Spleen (tissue), 13 donors: ENCODE measurements at regions of chr9 and their contacts with region 1.

Region 1: GRCh38 chr9:90914868-90915483 is 113.4 kb downstream of the SYK start:
- DNase-seq: peak; percentile 93
- H3K4me3 ChIP-seq: no peak overlapping the region
- H3K27ac ChIP-seq: no peak overlapping the region
- H3K4me1 ChIP-seq: peaks cover 0 to 9% (median 0%) of the 10 kb centered on the region in 6 donors
- H3K27me3 ChIP-seq: peaks cover 0 to 9% (median 0%) of the 10 kb centered on the region in 7 donors
- CTCF ChIP-seq: peak; percentile 88 to 97 (median 95)
- POLR2A ChIP-seq: no peak

Region 2: GRCh38 chr9:90645714-90646113 is 269.3 kb before region 1 on chr9:
- intact Hi-C with region 1: no loop called
- DNase-seq: no peak
- H3K4me3 ChIP-seq: no peak overlapping the region
- H3K27ac ChIP-seq: no peak overlapping the region
- H3K4me1 ChIP-seq: peaks cover 7 to 16% (median 10%) of the 10 kb centered on the region in 6 donors
- H3K27me3 ChIP-seq: peaks cover 0 to 85% (median 30%) of the 10 kb centered on the region in 7 donors
- CTCF ChIP-seq: no peak
- POLR2A ChIP-seq: no peak

Region 3: GRCh38 chr9:91727316-91727861 is 812.4 kb after region 1 on chr9:
- intact Hi-C with region 1: loop called (anchors 5 kb)
- DNase-seq: no peak
- H3K4me3 ChIP-seq: no peak overlapping the region
- H3K27ac ChIP-seq: no peak overlapping the region
- H3K4me1 ChIP-seq: no peaks in the 10 kb centered on the region
- H3K27me3 ChIP-seq: no peaks in the 10 kb centered on the region
- CTCF ChIP-seq: peak in 10 of 11 experiments; percentile 58 to 85 (median 69)
- POLR2A ChIP-seq: no peak